GM18951 (cell line): ENCODE measurements at regions of chr17 and their contacts with region 1.

Region 1: GRCh38 chr17:5097101-5097834 is 14.4 kb downstream of the ZNF232 start:
- POLR2A ChIP-seq: no peak

Region 2: DNA sequence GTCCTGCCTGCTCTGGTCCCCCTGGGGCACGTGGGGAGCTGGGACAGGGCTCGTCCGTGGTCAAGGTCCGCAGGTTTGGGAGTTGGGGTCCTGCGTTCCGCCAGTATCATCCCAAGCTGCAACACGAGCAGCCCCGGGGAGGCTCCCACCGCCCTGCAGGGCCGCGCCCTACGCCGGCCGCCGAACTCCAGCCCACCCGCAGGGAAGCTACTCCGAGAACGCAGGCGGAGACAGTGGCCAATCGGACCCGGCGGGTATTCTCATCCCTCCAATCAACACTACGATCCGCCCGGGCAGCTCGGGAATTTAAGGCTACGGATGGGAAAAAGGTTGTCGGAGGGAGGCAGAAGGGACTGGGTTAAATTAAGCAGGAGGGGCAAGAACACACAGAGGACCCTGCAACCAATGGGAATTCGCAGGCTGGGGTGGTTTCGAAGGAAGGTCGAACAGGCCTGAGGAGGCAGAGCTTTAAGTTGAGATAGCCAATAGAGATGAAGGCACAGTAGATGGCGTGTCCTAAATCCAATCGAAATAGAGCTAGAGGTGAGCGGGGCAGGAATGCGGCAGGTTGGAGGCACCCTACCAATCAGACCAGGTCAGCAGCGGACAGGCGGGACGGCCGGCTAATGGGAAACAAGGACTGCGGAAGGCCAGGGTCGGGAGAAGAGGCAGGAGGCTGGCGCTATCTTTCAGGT is 130.3 kb before region 1 on chr17:
- in situ Hi-C with region 1: no loop called
- POLR2A ChIP-seq: peak; percentile 46

Region 3: DNA sequence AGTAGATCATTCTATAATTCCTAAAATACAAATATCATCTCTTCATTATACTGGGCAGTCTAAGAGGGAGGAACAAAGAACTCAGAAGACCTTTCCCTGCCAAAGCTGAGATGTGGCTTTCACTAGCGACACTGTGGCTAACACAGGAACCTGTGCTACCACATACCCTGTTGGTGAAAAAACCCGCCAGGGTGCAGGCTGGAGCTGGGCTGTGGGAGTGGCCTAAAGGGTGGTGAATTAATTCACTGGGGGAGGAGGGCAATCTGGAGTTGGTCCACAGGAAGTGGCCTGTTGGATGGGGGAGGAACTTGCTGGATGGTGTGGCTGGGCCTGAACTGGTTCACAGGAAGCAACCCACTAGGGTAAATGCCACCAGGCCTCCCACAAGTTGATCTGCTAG is 87.0 kb after region 1 on chr17:
- in situ Hi-C with region 1: loop called (anchors 10 kb)
- POLR2A ChIP-seq: no peak